A549 (cell line): ENCODE measurements at regions of chr2 and their contacts with region 1.

Region 1: GRCh38 chr2:11389551-11390528 is 45.4 kb upstream of the ROCK2 start:
- DNase-seq: peak; percentile 98 to 99
- ATAC-seq: peak; percentile 82 to 86
- H3K4me3 ChIP-seq: no peak overlapping the region
- H3K27ac ChIP-seq: peak overlapping the region; percentile 86 to 92
- H3K4me1 ChIP-seq: peaks cover 89% of the 10 kb centered on the region
- CTCF ChIP-seq: no peak
- EP300 ChIP-seq: peak; percentile 94 to 97
- POLR2A ChIP-seq: no peak
- RAD21 ChIP-seq: peak; percentile 0 to 37; a peak in 3 of 5 replicates

Region 2: GRCh38 chr2:11377928-11378545 is 11.8 kb before region 1 on chr2:
- CTCF ChIA-PET with region 1: interaction called, 55 read pairs
- POLR2A ChIA-PET with region 1: interaction called, 14 read pairs
- DNase-seq: no peak
- ATAC-seq: no peak
- H3K4me3 ChIP-seq: no peak overlapping the region
- H3K27ac ChIP-seq: peak overlapping the region in 1 of 2 experiments; percentile 50; a peak in 4 of 6 replicates
- H3K4me1 ChIP-seq: peaks cover 40% of the 10 kb centered on the region
- CTCF ChIP-seq: no peak
- EP300 ChIP-seq: no peak
- POLR2A ChIP-seq: no peak
- RAD21 ChIP-seq: no peak

Region 3: DNA sequence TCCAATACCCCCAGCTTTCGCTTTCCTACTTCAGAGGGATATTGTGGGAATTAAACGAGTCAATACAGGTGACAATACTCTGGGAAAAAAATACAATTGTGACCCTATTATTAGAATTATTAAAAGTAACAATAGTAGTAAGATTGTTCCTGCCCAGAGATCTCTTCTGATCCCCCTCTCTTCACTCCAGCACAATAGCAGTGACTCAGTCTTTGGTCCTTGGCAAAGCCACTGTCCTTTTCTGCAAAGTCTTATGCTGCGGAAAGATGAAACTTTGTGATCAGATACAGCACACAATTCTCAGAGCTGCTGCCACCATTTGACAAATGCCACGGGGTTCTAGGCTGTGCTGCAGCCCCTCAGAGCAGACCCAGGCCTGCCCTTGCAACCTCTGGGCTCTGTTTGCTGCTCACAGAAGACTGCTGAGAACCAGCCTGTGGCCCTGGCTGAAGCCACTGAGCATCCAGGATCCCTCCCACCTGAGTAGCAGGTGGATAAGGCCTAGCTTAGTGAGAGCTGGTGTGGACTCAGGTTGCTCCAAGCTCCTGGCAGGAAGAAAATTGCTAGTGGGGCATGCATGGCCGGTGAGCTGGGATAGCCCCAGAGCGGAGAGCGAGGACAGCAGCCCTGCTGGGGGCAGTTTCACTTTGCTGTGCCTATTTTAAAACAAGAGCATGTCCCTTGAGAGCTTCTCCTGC is 14.7 kb after region 1 on chr2:
- CTCF ChIA-PET with region 1: interaction called, 13 read pairs
- POLR2A ChIA-PET with region 1: no interaction called
- DNase-seq: no peak
- ATAC-seq: peak in 1 of 2 experiments; percentile 7; a peak in 2 of 6 replicates
- H3K4me3 ChIP-seq: no peak overlapping the region
- H3K27ac ChIP-seq: peak overlapping the region in 1 of 2 experiments; percentile 58; a peak in 3 of 6 replicates
- H3K4me1 ChIP-seq: peaks cover 37% of the 10 kb centered on the region
- CTCF ChIP-seq: no peak
- EP300 ChIP-seq: no peak
- POLR2A ChIP-seq: no peak
- RAD21 ChIP-seq: no peak